Ovary (tissue), 10 donors: ENCODE measurements at regions of chr4 and their contacts with region 1.

Region 1: GRCh38 chr4:128809477-128810330 is at the start of gene JADE1:
- DNase-seq: peak; percentile 89 to 94 (median 90)
- H3K4me3 ChIP-seq: peak within 1 kb of the TSS; percentile 87
- H3K27ac ChIP-seq: peak within 1 kb of the TSS; percentile 54 to 72
- H3K4me1 ChIP-seq: no peaks in the 10 kb centered on the region
- H3K27me3 ChIP-seq: no peaks in the 10 kb centered on the region
- CTCF ChIP-seq: peak; percentile 34 to 80 (median 66)
- EP300 ChIP-seq: no peak
- POLR2A ChIP-seq: peak; percentile 59
- total RNA-seq, gene JADE1: 27.3 to 48.6 (median 37.5) TPM

Region 2: DNA sequence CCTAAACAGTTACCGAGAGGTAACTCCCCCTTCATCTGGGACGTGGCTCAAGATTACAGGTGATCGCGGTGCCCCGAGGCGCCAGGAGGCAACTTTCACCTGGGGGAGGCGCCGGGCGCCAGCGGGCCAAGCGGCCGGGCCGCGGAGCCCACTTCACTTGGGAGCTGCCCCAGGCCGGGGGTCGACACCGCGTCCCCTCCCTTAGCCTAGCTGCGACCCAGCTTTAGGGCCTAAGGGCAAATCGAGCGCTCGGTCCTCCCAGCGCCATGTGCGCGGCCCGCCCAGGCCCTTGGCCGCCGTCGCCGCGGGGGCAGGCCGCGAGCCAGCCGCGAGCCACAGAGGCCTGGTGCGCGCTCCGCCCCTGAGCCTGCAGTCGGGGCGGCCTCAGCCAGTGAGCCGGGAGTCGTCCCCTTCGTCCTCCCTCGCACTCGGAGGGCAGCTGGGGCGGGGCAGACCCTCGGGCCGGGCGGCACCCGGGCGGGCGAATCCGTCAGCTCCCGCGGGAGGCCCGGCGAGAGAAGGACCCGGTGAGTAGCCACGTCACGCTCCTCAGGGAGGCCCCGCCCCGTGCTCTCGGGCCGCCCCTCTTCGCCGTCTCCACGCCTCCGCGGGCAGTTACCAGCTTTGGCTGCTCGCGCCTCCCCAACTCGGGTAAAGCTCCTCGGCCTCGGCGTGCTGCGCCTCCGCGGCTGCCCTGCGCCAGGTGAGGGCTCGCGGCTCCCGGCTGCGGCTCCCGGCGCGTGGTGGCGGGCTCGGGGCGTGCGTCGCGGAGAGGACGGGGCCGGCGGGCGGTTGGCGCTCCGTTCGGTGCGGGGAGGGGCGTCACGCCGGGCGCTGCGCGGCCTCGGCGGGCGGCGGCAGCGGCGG is 748.8 kb before region 1 on chr4 and contains the start of gene LARP1B:
- intact Hi-C with region 1: loop called in 1 of 4 experiments (anchors 10 kb)
- DNase-seq: peak; percentile 94 to 96 (median 95)
- H3K4me3 ChIP-seq: peak within 1 kb of the TSS; percentile 77
- H3K27ac ChIP-seq: peak within 1 kb of the TSS; percentile 86 to 94
- H3K4me1 ChIP-seq: peaks cover 5% of the 10 kb centered on the region
- H3K27me3 ChIP-seq: no peaks in the 10 kb centered on the region
- CTCF ChIP-seq: peak in 2 of 3 donors; percentile 9 to 12
- EP300 ChIP-seq: no peak
- POLR2A ChIP-seq: peak; percentile 89
- total RNA-seq, gene LARP1B: 15.5 to 27.8 (median 20.3) TPM

Region 3: GRCh38 chr4:128558896-128559679 is 250.6 kb before region 1 on chr4:
- intact Hi-C with region 1: loop called in 1 of 4 experiments (anchors 10 kb)
- DNase-seq: no peak
- H3K4me3 ChIP-seq: no peak overlapping the region
- H3K27ac ChIP-seq: no peak overlapping the region
- H3K4me1 ChIP-seq: peaks cover 4% of the 10 kb centered on the region
- H3K27me3 ChIP-seq: no peaks in the 10 kb centered on the region
- CTCF ChIP-seq: no peak
- EP300 ChIP-seq: no peak
- POLR2A ChIP-seq: no peak

Region 4: DNA sequence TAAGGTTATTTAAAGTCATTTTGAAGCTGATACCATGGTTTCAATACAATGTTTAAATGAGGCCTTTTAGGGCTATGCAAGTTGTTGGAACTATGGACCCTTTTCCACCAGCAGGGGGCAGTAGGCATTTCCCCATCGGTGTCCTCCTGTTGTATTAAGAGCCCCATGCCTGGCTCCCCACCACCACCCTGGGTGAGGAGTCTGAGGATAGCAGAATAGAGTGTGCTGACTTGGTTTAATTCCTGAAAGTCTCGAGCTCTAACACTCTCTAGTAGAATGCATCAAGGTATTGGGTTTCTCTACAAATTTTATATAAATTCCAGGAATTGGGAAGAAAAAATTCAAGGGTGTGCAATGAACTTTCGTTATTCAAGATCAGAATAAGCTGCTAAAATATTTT is 235.0 kb before region 1 on chr4:
- intact Hi-C with region 1: loop called in 2 of 4 experiments (anchors 5 kb)
- DNase-seq: peak; percentile 36 to 79 (median 54)
- H3K4me3 ChIP-seq: no peak overlapping the region
- H3K27ac ChIP-seq: no peak overlapping the region
- H3K4me1 ChIP-seq: peaks cover 10% of the 10 kb centered on the region
- H3K27me3 ChIP-seq: no peaks in the 10 kb centered on the region
- CTCF ChIP-seq: peak in 1 of 3 donors; percentile 29
- EP300 ChIP-seq: no peak
- POLR2A ChIP-seq: no peak

Region 5: DNA sequence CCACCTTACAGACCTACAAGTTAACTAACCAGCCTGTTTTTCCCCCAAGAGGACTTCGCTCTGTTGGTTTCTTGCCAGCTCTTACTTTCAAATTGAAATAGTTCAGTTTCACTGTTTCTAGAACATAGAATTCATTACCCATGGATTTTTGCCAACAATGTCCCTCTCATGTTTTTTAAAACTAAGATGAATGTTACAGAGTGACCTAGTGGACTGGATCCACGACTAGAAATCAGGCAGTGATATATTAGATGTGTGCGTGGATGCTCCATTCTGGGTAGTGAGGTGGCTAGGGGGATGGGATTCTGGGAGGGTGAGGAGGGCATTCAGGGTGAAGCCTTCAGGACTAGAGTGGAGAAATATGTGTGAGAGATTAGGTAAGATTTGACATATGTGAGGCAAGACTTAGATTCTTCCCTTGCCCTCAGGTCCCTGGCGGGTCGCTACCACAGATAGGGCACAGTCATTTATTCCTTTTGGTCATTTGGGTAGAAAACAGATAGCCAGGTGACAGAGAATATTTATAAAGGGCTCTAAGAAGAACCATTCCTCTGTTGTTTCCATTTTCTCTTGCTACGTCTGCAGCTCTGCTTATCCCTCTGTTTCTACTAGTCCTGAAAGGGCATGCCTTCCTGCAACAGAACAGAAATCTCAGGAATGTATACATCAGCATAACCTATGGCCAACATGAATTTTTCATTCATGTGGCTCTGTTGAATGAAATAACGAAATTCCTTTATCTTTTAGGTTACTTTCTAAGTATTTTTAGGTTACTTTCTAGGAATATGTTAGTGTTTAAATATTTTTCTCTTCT is 15.6 kb before region 1 on chr4:
- intact Hi-C with region 1: no loop called
- DNase-seq: no peak
- H3K4me3 ChIP-seq: no peak overlapping the region
- H3K27ac ChIP-seq: no peak overlapping the region
- H3K4me1 ChIP-seq: no peaks in the 10 kb centered on the region
- H3K27me3 ChIP-seq: no peaks in the 10 kb centered on the region
- CTCF ChIP-seq: no peak
- EP300 ChIP-seq: no peak
- POLR2A ChIP-seq: no peak

Region 6: GRCh38 chr4:128863312-128864075 is 53.8 kb after region 1 on chr4:
- intact Hi-C with region 1: loop called in 3 of 4 experiments (anchors 5 to 10 kb)
- DNase-seq: peak; percentile 78 to 87 (median 85)
- H3K4me3 ChIP-seq: no peak overlapping the region
- H3K27ac ChIP-seq: no peak overlapping the region
- H3K4me1 ChIP-seq: peaks cover 7% of the 10 kb centered on the region
- H3K27me3 ChIP-seq: no peaks in the 10 kb centered on the region
- CTCF ChIP-seq: peak; percentile 83 to 88 (median 84)
- EP300 ChIP-seq: no peak
- POLR2A ChIP-seq: no peak